Activated CD4-positive, alpha-beta T cell treated with anti-CD3 and anti-CD28 coated beads, Interleukin-2, amount 10 ng/mL, durations not matched to agents 24 days and 14 days (primary cell): ENCODE measurements at regions of chr5 and their contacts with region 1.

Region 1: DNA sequence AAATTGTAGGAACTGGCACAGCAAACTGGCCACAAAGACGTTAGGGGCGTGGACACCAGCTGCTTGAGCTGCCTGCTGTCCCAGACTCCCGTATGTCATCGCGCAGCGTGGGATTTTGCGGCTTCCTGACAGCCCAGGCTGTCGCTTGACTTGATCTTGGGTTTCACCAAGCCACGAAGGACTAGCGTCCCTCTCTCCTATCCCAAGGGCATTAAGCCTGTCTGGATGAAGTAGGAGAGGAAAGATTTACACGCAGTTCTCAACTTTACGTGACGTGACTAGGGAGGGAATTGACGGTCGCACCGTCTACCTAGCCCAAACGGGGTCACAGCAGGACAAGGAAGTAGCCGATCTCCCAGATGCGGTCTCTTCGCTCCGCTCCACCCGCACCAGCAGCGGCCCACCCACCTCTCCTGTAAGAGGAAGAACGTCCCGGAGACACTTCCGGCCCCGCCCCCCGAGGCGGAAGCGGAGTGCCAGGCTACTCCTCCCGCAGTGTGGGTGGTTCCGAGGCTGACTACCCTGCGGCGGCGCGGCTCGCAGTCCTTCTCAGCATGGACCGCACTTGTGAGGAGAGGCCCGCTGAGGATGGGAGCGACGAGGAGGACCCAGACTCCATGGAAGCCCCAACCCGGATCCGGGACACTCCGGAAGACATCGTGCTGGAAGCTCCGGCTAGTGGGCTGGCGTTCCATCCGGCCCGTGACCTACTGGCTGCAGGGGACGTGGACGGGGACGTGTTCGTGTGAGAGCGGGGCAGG is at the start of gene WDR55:
- DNase-seq: peak; percentile 99
- H3K4me3 Mint-ChIP-seq: peak within 1 kb of the TSS; percentile 100
- H3K27ac Mint-ChIP-seq: peak within 1 kb of the TSS; percentile 98
- H3K4me1 Mint-ChIP-seq: peaks cover 26% of the 10 kb centered on the region
- H3K27me3 Mint-ChIP-seq: no peaks in the 10 kb centered on the region
- total RNA-seq, gene WDR55: 41.6 and 42.9 TPM in 2 replicates

Region 2: DNA sequence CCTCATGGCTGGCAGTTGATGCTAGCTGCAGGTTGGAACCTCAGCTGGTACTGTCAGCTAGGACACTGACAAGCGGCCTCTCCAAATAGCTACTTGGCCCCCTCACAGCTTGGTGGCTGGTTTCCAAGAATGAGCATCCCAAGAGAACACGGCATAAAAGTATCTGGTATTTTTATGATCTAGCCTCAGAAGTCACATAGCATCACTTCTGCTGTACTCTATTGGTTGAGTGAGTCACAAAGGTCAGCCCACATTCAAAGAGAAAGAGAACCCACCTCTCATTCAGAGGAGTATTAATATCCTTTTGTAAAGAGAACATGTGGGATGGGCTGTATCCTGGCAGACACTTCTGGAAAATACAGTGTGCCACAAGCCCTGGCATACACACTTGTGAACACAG is 1460.3 kb before region 1 on chr5:
- intact Hi-C with region 1: no loop called
- DNase-seq: no peak
- H3K4me3 Mint-ChIP-seq: no peak overlapping the region
- H3K27ac Mint-ChIP-seq: no peak overlapping the region
- H3K4me1 Mint-ChIP-seq: peaks cover 11% of the 10 kb centered on the region
- H3K27me3 Mint-ChIP-seq: no peaks in the 10 kb centered on the region

Region 3: GRCh38 chr5:140342287-140342686 is 322.3 kb before region 1 on chr5:
- intact Hi-C with region 1: no loop called
- DNase-seq: peak; percentile 87
- H3K4me3 Mint-ChIP-seq: peak overlapping the region; percentile 89
- H3K27ac Mint-ChIP-seq: peak overlapping the region; percentile 98
- H3K4me1 Mint-ChIP-seq: peaks cover 66% of the 10 kb centered on the region
- H3K27me3 Mint-ChIP-seq: no peaks in the 10 kb centered on the region

Region 4: GRCh38 chr5:140639148-140639979 is 25.2 kb before region 1 on chr5 and contains the start of gene TMCO6:
- intact Hi-C with region 1: loop called (anchors 1 kb)
- DNase-seq: peak; percentile 98
- H3K4me3 Mint-ChIP-seq: peak within 1 kb of the TSS; percentile 86
- H3K27ac Mint-ChIP-seq: peak within 1 kb of the TSS; percentile 90
- H3K4me1 Mint-ChIP-seq: peaks cover 37% of the 10 kb centered on the region
- H3K27me3 Mint-ChIP-seq: no peaks in the 10 kb centered on the region
- total RNA-seq, gene TMCO6: 38.1 and 41.9 TPM in 2 replicates

Region 5: DNA sequence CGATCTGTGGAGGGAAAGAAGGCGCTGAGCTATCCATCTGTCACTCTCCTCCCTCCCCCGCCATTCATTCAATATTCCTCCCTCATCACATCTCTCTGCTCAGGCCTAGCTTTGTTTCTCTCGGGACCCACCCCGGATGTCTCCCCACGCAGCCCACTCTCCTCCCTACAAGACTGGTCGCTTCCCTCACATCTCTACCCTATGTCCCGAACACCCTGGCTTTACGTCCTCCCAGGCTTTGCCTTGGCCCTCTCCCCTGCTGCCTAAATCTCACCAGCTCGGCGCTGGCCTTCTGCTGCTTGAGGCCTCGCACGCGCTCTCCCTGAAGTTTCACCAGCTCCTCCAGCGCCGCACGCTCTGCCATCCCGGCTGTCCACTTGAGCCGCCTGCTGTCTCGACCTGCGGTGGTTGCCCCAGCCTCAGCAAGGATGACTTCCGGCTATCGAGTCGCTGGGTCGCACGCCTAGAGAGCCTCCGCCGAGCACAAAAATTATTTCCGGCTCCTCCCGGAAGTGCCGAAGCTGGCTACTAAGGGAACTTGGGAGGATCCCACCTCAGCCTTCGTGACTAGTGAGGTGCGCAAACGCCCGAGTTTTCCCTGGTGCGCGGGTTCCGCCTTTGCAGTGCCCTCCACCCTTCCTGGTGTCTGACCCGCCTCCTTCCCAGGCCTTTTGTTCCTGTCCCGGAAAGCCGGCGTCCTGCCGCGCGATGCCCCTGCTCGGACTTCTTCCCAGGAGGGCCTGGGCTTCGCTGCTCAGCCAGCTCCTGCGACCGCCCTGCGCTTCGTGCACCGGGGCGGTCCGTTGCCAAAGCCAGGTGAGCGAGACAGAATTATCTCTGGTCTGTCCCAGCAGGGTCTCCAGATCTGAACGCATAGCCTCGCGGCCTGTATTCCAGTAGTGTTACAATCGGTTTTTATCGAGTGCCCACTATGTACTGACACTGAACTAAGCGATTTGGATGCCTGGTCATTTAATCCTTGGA is 26.7 kb after region 1 on chr5 and contains the starts of genes HARS1 and HARS2:
- intact Hi-C with region 1: loop called (anchors 1 kb)
- DNase-seq: peak; percentile 96
- H3K4me3 Mint-ChIP-seq: peak within 1 kb of the TSS; percentile 98
- H3K27ac Mint-ChIP-seq: peak within 1 kb of the TSS; percentile 98
- H3K4me1 Mint-ChIP-seq: peaks cover 30% of the 10 kb centered on the region
- H3K27me3 Mint-ChIP-seq: no peaks in the 10 kb centered on the region
- total RNA-seq, gene HARS1: 109 and 115 TPM in 2 replicates
- total RNA-seq, gene HARS2: 28.0 and 29.6 TPM in 2 replicates

Region 6: GRCh38 chr5:140700177-140701144 is 35.9 kb after region 1 on chr5 and contains the start of gene ZMAT2:
- intact Hi-C with region 1: loop called (anchors 1 kb)
- DNase-seq: peak; percentile 98
- H3K4me3 Mint-ChIP-seq: peak within 1 kb of the TSS; percentile 99
- H3K27ac Mint-ChIP-seq: peak within 1 kb of the TSS; percentile 96
- H3K4me1 Mint-ChIP-seq: peaks cover 24% of the 10 kb centered on the region
- H3K27me3 Mint-ChIP-seq: no peaks in the 10 kb centered on the region
- total RNA-seq, gene ZMAT2: 67.1 and 67.2 TPM in 2 replicates

Region 7: DNA sequence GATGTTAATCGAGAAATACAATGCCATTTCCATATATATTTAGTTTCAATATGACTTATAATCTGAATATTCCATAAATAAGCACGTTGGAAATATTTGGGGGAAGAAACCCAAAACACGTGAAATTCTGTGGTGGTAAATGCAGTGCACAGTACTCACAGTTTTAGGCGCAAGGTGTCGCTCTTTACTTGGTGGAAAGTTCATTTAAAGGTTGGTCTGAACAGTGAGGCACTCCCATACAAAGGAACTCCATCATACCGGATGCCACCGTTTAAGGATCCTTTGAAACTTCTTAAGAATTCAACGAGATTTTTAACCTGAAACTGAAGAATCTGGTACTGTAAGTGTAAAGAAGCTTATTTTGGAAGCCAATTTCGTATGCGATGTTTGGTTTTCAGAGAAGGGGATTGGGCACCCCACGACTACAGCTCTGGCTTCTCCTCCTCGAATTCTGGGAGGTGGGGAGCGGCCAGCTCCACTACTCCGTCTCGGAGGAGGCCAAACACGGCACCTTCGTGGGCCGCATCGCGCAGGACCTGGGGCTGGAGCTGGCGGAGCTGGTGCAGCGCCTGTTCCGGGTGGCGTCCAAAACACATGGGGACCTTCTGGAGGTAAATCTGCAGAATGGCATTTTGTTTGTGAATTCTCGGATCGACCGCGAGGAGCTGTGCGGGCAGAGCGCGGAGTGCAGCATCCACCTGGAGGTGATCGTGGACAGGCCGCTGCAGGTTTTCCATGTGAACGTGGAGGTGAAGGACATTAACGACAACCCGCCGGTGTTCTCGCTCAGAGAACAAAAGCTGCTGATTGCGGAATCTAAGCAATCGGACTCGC is 204.4 kb after region 1 on chr5 and contains the start of gene PCDHA11:
- intact Hi-C with region 1: no loop called
- DNase-seq: no peak
- H3K4me3 Mint-ChIP-seq: no peak within 1 kb of the TSS
- H3K27ac Mint-ChIP-seq: no peak within 1 kb of the TSS
- H3K4me1 Mint-ChIP-seq: no peaks in the 10 kb centered on the region
- H3K27me3 Mint-ChIP-seq: no peaks in the 10 kb centered on the region
- total RNA-seq, gene PCDHA11: not detected in 2 replicates

Region 8: GRCh38 chr5:141094481-141095262 is 430.1 kb after region 1 on chr5 and contains the start of gene PCDHB2:
- intact Hi-C with region 1: no loop called
- DNase-seq: no peak
- H3K4me3 Mint-ChIP-seq: peak within 1 kb of the TSS; percentile 54
- H3K27ac Mint-ChIP-seq: no peak within 1 kb of the TSS
- H3K4me1 Mint-ChIP-seq: no peaks in the 10 kb centered on the region
- H3K27me3 Mint-ChIP-seq: peaks cover 3% of the 10 kb centered on the region
- total RNA-seq, gene PCDHB2: 0.19 TPM in 1 of 2 replicates, not detected in the other